Transverse colon (tissue), 4 donors: ENCODE measurements at regions of chr5 and their contacts with region 1.

Region 1: DNA sequence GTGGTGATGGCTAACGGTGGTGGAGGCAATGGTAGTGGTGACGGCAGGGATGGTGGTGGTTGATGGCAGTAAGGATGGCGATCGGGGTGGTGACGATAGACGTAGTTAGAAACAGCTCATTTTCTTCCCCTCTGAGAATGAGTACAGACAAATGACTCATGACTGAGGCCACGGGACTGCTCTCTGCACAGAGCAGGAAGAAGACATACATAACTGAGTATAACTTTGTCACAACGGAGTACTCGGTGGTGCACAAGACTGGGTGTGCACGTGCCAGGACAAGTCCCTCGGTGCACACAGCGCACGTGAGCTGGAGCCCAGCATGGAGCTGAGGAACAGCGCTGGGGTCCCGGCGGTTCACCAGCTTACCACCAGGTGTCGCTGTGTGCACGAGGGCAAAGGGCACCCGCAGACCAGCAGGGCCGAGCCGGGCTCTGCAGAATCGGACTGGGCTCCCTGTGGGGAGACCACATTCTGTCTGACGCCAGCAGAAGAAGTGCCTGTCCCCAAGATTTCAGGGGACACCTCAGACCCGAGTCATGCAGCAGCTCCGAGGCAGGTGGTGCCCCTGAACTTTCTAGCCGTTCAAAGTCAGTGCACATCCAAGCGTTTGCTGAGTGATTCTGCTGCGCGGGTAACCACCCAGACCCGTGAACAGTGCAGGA is 188.6 kb downstream of the FSTL4 start:
- DNase-seq: peak; percentile 73
- H3K4me3 ChIP-seq: no peak overlapping the region
- H3K27ac ChIP-seq: no peak overlapping the region
- H3K4me1 ChIP-seq: no peaks in the 10 kb centered on the region
- H3K27me3 ChIP-seq: no peaks in the 10 kb centered on the region
- CTCF ChIP-seq: peak; percentile 82 to 93 (median 89)
- EP300 ChIP-seq: no peak
- POLR2A ChIP-seq: no peak

Region 2: GRCh38 chr5:133589281-133589680 is 165.5 kb after region 1 on chr5:
- in situ Hi-C with region 1: no loop called
- intact Hi-C with region 1: no loop called
- DNase-seq: no peak
- H3K4me3 ChIP-seq: no peak overlapping the region
- H3K27ac ChIP-seq: no peak overlapping the region
- H3K4me1 ChIP-seq: no peaks in the 10 kb centered on the region
- H3K27me3 ChIP-seq: no peaks in the 10 kb centered on the region
- CTCF ChIP-seq: no peak
- EP300 ChIP-seq: no peak
- POLR2A ChIP-seq: no peak

Region 3: DNA sequence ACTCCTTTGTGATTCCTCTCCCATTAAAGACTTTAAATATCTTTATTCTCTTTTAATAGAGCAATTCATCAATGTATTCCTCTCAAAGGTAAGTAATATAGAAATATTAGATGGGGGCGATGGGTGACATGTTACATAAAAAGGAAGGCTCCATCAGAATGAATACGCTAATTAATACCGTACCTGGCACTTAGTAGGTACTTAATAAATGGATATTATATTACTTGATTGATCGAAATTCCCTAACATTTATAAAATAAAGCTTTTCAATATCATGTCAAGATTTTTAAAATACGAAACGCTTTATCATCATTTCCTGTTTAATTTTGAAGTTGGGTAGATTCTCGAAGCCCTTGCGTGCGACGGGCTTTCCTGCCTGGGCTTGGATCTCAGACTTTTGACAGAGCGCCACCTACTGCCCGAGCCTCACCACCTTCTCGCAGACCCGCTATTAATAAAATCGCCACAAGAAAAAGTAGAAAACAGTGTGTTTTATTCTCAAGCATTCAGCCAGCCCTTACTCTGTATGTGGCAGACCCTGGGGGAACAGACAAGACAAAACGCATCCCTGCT is 445.3 kb after region 1 on chr5:
- in situ Hi-C with region 1: loop called in 2 of 4 experiments (anchors 25 kb)
- intact Hi-C with region 1: no loop called
- DNase-seq: peak; percentile 69
- H3K4me3 ChIP-seq: no peak overlapping the region
- H3K27ac ChIP-seq: no peak overlapping the region
- H3K4me1 ChIP-seq: no peaks in the 10 kb centered on the region
- H3K27me3 ChIP-seq: peaks cover 3% of the 10 kb centered on the region
- CTCF ChIP-seq: peak; percentile 63 to 72 (median 70)
- EP300 ChIP-seq: no peak
- POLR2A ChIP-seq: no peak